K562 (cell line): ENCODE measurements at regions of chr16 and their contacts with region 1.

Region 1: GRCh38 chr16:67428146-67428731 is 2.7 kb upstream of the HSD11B2 start:
- DNase-seq: peak; percentile 80 to 86 (median 82)
- ATAC-seq: peak; percentile 90
- H3K4me3 ChIP-seq: no peak overlapping the region
- H3K27ac ChIP-seq: no peak overlapping the region
- H3K4me1 ChIP-seq: peaks cover 8 to 25% of the 10 kb centered on the region in 2 experiments; a peak in 4 of 5 replicates
- H3K27me3 ChIP-seq: peaks cover 0 to 11% of the 10 kb centered on the region in 2 experiments; a peak in 1 of 5 replicates
- CTCF ChIP-seq: peak; percentile 94
- EP300 ChIP-seq: no peak
- POLR2A ChIP-seq: no peak
- RAD21 ChIP-seq: peak; percentile 51 to 86; a peak in 3 of 4 replicates

Region 2: DNA sequence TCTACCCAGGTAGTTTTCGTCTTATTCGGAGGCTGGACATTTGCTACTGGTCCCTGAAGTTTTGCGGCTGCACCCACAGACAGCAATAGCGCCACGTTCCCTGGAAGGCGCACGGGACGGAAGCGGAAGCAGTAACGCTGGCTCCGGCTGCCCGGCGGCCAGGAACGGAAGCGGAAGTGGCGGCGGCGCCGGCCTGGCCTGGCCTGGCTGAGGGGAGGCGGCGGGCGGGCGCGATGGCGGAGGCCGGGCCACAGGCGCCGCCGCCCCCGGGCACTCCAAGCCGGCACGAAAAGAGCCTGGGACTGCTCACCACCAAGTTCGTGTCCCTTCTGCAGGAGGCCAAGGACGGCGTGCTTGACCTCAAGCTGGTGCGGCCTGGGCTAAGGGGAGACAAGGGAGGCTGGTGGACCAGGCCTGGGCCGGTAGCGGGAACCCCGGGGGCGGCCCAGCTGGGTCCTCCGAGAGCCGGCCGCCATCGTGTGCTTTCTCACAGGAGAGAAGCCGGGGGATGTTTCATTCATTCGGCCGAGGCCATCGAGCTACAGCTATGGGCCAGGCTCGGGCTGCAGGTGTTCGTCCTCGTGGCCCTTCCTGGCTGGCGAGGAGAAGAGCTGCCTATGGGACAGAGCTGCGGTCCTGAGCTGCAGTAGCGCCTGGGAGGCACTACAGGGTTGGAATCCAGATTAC is 236.1 kb before region 1 on chr16 and contains the start of gene E2F4:
- CTCF ChIA-PET with region 1: no interaction called
- POLR2A ChIA-PET with region 1: no interaction called
- in situ Hi-C with region 1: no loop called
- intact Hi-C with region 1: no loop called
- DNase-seq: peak; percentile 88 to 96 (median 90)
- ATAC-seq: peak; percentile 98
- H3K4me3 ChIP-seq: peak within 1 kb of the TSS; percentile 83
- H3K27ac ChIP-seq: peak within 1 kb of the TSS; percentile 63
- H3K4me1 ChIP-seq: peaks cover 38 to 69% of the 10 kb centered on the region in 2 experiments
- H3K27me3 ChIP-seq: no peaks in the 10 kb centered on the region
- CTCF ChIP-seq: no peak
- EP300 ChIP-seq: peak; percentile 41; the same call in 1 of the 2 replicates
- POLR2A ChIP-seq: peak; percentile 66; the same call in 1 of the 2 replicates
- RAD21 ChIP-seq: no peak
- polyA plus RNA-seq, gene E2F4: 9.7 to 18.9 TPM

Region 3: GRCh38 chr16:67216612-67217490 is 211.4 kb before region 1 on chr16:
- CTCF ChIA-PET with region 1: no interaction called
- POLR2A ChIA-PET with region 1: no interaction called
- in situ Hi-C with region 1: no loop called
- intact Hi-C with region 1: no loop called
- DNase-seq: peak; percentile 64 to 83 (median 73)
- ATAC-seq: peak; percentile 89
- H3K4me3 ChIP-seq: no peak overlapping the region
- H3K27ac ChIP-seq: peak overlapping the region; percentile 42
- H3K4me1 ChIP-seq: peaks cover 20 to 24% of the 10 kb centered on the region in 2 experiments
- H3K27me3 ChIP-seq: no peaks in the 10 kb centered on the region
- CTCF ChIP-seq: no peak
- EP300 ChIP-seq: 0 out of 2 replicates have a peak, but pooled peaks have one; percentile 31
- POLR2A ChIP-seq: no peak
- RAD21 ChIP-seq: no peak

Region 4: DNA sequence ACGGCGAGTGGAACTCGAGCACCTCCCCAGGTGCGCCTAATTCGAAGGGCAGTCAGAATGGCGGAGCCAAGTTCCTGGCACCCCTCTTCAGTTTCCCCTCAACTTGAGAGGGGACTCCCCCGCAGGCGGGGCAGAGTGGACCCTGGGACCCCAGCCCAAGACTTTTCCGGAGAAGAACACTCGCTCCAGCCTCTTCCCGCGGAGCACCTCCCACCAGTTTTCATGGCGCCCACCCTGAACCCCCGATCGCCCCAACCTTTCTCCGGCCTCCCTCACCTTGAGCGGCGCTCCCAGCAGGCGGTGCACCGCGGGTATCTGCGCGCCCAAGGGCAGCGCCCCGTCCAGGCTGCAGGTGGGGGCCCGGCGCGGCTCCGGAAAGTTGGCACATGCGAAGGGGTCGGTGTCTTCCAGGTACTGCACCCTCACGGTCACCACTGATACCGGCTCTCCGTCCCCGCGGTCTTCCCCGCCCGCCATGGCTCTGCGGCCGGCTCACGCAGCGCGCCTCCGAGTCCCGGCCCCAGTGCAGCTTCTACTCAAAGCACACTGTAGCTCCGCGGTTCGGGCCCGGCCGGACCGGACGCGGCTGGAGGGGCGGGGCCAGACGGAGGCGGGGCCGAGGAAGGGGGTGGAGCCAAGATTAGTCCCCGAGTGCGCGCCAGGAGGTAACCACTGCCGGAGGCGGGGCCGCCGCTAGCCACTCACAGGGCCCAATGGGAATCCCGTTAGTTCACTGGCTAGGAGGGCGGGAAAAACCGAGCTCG is 181.1 kb before region 1 on chr16 and contains the start of gene FHOD1:
- CTCF ChIA-PET with region 1: no interaction called
- POLR2A ChIA-PET with region 1: no interaction called
- in situ Hi-C with region 1: no loop called
- intact Hi-C with region 1: no loop called
- DNase-seq: peak; percentile 94 to 98 (median 96)
- ATAC-seq: peak; percentile 84
- H3K4me3 ChIP-seq: peak within 1 kb of the TSS; percentile 88
- H3K27ac ChIP-seq: peak within 1 kb of the TSS; percentile 68
- H3K4me1 ChIP-seq: peaks cover 51 to 70% of the 10 kb centered on the region in 2 experiments
- H3K27me3 ChIP-seq: no peaks in the 10 kb centered on the region
- CTCF ChIP-seq: no peak
- EP300 ChIP-seq: no peak
- POLR2A ChIP-seq: peak; percentile 90
- RAD21 ChIP-seq: no peak
- polyA plus RNA-seq, gene FHOD1: 18.7 to 19.2 TPM

Region 5: DNA sequence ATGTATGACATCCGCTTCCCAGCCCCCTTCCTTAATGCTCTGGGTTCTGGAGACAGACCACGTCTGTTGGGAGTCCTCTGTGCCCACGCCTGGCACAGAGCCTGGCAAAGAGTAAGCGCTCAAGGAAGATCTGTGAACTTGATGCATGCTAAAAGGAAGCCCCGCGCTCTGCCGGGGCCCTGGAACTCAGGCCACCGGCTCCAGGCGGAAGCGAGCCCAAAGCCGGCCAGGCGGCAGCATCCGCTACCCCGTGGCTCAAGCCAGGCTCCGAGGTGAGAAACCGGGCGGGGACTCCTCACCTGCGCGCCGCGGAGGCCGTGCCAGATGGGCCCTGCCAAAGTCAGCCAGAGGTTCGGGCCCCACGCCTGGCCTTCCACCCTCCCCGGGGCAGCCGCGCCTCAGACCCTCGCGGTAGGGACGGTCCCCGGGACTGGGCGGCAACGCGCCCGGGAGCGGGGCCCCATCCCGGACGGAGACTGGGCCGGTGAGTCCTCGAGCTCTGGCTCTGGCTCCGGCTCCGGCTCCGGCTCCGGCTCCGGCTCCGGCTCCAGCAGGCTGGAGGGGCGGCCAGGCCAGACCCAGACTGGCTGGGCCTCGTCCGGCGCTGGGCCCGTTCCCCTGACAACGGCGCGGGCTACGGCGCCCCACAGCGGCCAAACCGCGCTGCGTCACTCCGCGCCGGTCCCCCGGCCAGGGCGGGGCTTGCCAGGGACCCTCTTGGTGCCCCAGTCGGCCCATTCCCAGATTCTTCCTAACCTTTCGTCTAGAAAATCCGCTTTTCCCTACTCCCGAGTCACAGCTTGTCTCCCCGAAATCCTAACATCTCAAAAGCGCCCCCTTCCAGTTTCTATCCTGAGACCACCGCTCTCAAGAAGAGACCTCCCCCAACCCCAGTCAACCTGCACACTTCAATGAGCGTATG is 12.1 kb before region 1 on chr16 and contains the start of gene ZDHHC1:
- CTCF ChIA-PET with region 1: no interaction called
- POLR2A ChIA-PET with region 1: interaction called, 12 read pairs
- in situ Hi-C with region 1: no loop called
- intact Hi-C with region 1: no loop called
- DNase-seq: peak in 3 of 4 experiments; percentile 55 to 74 (median 72)
- ATAC-seq: peak; percentile 92
- H3K4me3 ChIP-seq: no peak within 1 kb of the TSS
- H3K27ac ChIP-seq: no peak within 1 kb of the TSS
- H3K4me1 ChIP-seq: peaks cover 0 to 9% of the 10 kb centered on the region in 2 experiments; a peak in 2 of 5 replicates
- H3K27me3 ChIP-seq: peaks cover 40 to 65% of the 10 kb centered on the region in 2 experiments
- CTCF ChIP-seq: peak; percentile 33 to 57 (median 50); a peak in 4 of 6 replicates
- EP300 ChIP-seq: no peak
- POLR2A ChIP-seq: no peak
- RAD21 ChIP-seq: peak in 1 of 2 experiments; percentile 52; a peak in 2 of 4 replicates
- polyA plus RNA-seq, gene ZDHHC1: not detected

Region 6: DNA sequence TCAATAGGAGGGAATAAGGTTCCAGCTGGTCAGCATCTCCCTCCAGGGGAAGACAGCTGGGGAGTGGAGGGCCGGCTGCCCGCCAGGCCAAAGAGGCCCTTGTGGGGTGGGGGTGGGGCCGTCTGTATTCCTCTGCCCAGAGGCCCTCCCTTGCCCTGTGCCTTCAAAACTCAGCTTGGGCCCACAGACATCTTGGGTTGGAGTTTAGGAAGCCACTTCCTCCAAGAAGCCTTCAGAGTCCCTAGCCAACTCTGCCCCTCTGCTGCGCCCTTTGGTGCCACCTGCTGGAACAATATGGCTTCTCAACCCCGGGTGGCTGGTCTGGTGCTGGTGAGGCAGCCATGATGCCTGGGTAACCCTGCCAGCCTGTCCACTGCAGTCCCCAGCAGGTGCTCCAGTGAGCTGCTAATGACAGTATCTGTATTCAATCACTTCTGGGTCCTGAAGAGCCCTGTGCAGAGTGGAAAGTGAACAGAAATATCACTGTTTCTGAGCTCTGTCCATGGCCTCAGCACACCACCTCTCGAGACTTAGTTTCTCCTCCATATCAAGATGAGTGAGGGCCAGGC is 19.4 kb after region 1 on chr16:
- CTCF ChIA-PET with region 1: no interaction called
- POLR2A ChIA-PET with region 1: interaction called, 3 read pairs
- in situ Hi-C with region 1: no loop called
- intact Hi-C with region 1: loop called (anchors 2 kb)
- DNase-seq: peak; percentile 65 to 76 (median 70)
- ATAC-seq: peak; percentile 90
- H3K4me3 ChIP-seq: no peak overlapping the region
- H3K27ac ChIP-seq: no peak overlapping the region
- H3K4me1 ChIP-seq: peaks cover 0 to 32% of the 10 kb centered on the region in 2 experiments; a peak in 2 of 5 replicates
- H3K27me3 ChIP-seq: no peaks in the 10 kb centered on the region
- CTCF ChIP-seq: peak; percentile 70 to 77 (median 73)
- EP300 ChIP-seq: no peak
- POLR2A ChIP-seq: no peak
- RAD21 ChIP-seq: peak in 1 of 2 experiments; percentile 50; a peak in 3 of 4 replicates

Region 7: DNA sequence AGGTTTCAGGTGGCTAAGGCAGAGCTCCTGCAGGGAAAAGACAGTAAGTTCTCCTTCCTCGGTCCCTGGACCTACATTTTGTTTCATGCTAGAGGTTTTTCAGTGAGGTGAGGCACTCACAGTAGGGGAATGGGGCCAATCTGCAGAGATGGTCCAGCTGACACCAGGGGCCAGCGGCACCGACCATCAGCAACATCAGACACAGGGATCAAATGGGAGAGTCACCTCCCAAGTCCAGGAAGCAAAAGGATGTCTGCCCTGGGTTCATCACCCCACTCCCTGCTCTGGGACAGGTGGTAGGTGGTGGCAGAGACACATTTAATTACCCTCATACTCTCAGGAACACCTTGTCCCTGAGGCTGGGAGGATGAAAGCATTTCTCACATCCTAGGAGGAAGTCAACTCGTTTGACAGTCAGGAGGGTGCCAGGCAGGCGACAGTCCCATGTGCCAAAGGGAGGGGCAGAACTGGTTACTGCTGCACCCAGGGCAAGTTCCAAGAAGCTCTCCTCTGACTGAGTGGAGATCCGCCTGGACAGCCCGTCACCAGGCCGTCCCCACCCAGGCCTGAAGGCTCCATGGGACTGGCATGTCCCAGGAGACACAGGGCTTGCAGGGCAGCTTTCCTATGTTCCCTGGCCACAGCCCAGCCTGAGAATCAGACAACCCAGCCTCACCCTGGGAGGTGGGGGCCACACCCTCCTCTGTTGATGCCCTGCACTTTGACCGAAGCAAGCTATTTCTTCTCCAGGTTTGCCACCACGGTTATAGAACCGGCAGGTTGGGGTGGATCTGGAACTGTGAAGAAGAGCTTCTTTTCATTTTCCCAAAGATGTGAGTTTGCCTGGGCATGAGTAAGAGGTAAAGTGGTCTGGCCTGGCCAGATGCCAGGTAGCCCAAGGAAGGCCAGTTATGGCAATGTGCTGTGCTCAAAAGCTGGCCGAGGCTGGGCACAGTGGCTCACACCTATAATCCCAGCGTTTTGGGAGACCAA is 33.7 kb after region 1 on chr16:
- CTCF ChIA-PET with region 1: interaction called, 5 read pairs
- POLR2A ChIA-PET with region 1: interaction called, 4 read pairs
- in situ Hi-C with region 1: no loop called
- intact Hi-C with region 1: loop called (anchors 2 kb)
- DNase-seq: no peak
- ATAC-seq: no peak
- H3K4me3 ChIP-seq: no peak overlapping the region
- H3K27ac ChIP-seq: no peak overlapping the region; the same call in 2 of the 3 replicates
- H3K4me1 ChIP-seq: peaks cover 30 to 48% of the 10 kb centered on the region in 2 experiments
- H3K27me3 ChIP-seq: no peaks in the 10 kb centered on the region
- CTCF ChIP-seq: no peak
- EP300 ChIP-seq: no peak
- POLR2A ChIP-seq: no peak
- RAD21 ChIP-seq: no peak

Region 8: GRCh38 chr16:67514382-67514828 is 86.2 kb after region 1 on chr16:
- CTCF ChIA-PET with region 1: no interaction called
- POLR2A ChIA-PET with region 1: no interaction called
- in situ Hi-C with region 1: no loop called
- intact Hi-C with region 1: loop called (anchors 10 kb)
- DNase-seq: peak; percentile 57 to 92 (median 63)
- ATAC-seq: peak; percentile 88
- H3K4me3 ChIP-seq: no peak overlapping the region
- H3K27ac ChIP-seq: no peak overlapping the region; the same call in 2 of the 3 replicates
- H3K4me1 ChIP-seq: peaks cover 2 to 3% of the 10 kb centered on the region in 2 experiments; a peak in 3 of 5 replicates
- H3K27me3 ChIP-seq: no peaks in the 10 kb centered on the region
- CTCF ChIP-seq: peak; percentile 76 to 91 (median 79)
- EP300 ChIP-seq: no peak
- POLR2A ChIP-seq: no peak
- RAD21 ChIP-seq: peak; percentile 87 to 94